ENCODE measurements at regions of chr16 and their contacts with region 1.

Region 1: DNA sequence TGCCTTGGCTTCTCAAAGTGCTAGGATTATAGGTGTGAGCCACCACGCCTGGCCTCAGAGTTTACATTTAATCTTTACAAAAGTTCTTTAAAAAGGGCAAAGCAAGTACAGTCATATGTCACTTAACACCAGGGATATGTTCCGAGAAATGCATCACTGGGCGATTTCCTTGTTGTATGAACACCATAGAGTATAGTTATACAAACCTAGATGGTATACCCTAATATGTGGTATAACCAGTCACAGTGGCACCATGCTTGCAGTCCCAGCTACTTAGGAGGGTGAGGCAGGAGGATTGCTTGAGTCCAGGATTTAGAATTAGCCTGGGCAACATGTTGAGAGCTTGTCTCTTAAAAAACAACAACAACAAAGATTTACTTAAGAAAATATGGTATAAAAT is 51.3 kb downstream of the NFATC3 start:
- DNase-seq: no peak
- H3K4me3 ChIP-seq: no peak overlapping the region
- H3K27ac ChIP-seq: no peak overlapping the region
- H3K4me1 ChIP-seq: peaks cover 5% of the 10 kb centered on the region
- CTCF ChIP-seq: no peak

Region 2: DNA sequence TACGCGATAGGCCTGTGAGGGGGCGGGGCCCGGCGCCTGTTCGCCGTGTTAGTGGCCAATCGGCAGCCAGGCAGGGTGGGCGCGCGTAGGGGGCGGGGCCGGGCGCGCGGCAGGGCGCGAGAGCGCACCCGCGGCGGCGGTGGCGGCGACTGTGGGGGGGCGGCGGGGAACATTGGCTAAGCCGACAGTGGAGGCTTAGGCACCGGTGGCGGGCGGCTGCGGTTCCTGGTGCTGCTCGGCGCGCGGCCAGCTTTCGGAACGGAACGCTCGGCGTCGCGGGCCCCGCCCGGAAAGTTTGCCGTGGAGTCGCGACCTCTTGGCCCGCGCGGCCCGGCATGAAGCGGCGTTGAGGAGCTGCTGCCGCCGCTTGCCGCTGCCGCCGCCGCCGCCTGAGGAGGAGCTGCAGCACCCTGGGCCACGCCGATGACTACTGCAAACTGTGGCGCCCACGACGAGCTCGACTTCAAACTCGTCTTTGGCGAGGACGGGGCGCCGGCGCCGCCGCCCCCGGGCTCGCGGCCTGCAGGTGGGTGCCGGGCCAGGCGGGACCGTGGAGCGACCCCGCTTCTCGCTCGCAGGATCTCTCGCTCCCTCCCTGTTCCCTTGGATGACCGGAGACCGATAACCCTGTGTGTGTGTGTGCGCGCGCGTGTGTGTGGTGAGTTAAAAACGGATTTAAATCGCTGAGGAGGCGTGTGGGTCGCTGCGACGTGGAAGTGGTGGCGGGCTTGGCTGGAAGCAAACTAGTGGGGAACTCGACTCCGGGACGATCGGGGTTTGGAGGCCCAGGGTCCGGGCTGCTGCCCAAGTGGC is 51.0 kb before region 1 on chr16 and contains the start of gene NFATC3:
- CTCF ChIA-PET with region 1: no interaction called
- POLR2A ChIA-PET with region 1: no interaction called
- intact Hi-C with region 1: no loop called
- DNase-seq: peak; percentile 98
- H3K4me3 ChIP-seq: peak within 1 kb of the TSS; percentile 91
- H3K27ac ChIP-seq: peak within 1 kb of the TSS; percentile 90
- H3K4me1 ChIP-seq: peaks cover 62% of the 10 kb centered on the region
- CTCF ChIP-seq: no peak
- total RNA-seq, gene NFATC3: 60.9 and 73.4 TPM in 2 replicates

Region 3: GRCh38 chr16:68149596-68149995 is 13.1 kb after region 1 on chr16:
- CTCF ChIA-PET with region 1: no interaction called
- POLR2A ChIA-PET with region 1: interaction called, 12 read pairs
- intact Hi-C with region 1: no loop called
- DNase-seq: no peak
- H3K4me3 ChIP-seq: no peak overlapping the region
- H3K27ac ChIP-seq: no peak overlapping the region
- H3K4me1 ChIP-seq: no peaks in the 10 kb centered on the region
- CTCF ChIP-seq: no peak

Measured in OCI-LY7 (cell line).